ENCODE measurements at regions of chr12 and their contacts with region 1.

Region 1: GRCh38 chr12:92094751-92095161 is 50.9 kb downstream of the BTG1 start:
- DNase-seq: no peak
- H3K4me3 ChIP-seq: no peak overlapping the region
- CTCF ChIP-seq: peak; percentile 12

Region 2: GRCh38 chr12:91947459-91947858 is 147.3 kb before region 1 on chr12:
- in situ Hi-C with region 1: loop called (anchors 5 kb)
- DNase-seq: no peak
- H3K4me3 ChIP-seq: no peak overlapping the region
- CTCF ChIP-seq: no peak

Region 3: DNA sequence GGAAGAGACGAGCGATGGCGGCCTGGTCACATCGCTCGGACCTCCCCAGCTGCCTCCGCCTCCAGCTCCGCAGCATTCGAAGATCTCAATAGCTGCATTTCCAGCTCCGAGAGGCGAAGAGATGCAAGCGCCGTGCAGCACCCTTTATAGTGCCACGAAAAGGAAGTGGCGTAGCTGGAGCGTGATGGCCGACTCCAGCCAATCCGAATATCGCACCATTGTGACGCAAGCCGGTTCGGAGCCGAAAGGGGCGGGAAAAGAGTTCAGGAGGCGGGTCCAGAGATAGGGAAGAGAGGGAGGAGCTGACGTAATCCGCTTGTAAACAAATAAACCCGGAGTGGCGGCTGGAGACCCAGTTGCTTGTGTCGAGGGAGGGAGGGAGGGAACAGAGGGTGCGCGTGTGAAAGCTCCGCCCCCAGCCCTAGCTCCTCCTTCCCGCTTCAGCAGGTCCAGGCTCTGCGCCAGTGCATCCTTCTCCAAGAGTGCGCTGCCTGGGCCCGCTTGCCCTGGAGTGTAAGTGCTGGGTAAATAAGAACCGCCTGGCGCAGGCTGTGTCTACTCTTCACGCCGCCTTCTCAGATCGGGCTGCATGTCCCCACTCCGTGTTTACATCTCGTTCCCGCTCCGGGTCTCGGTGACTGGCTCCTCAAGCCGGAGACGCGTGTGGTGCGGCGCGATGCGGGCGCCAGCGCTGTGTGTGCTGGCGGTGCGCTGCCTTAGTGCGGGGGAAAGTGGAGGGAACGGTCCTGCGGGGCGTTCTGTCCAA is 51.2 kb after region 1 on chr12 and contains the start of gene BTG1:
- in situ Hi-C with region 1: no loop called
- DNase-seq: peak; percentile 100
- H3K4me3 ChIP-seq: peak within 1 kb of the TSS; percentile 79
- CTCF ChIP-seq: no peak

Region 4: GRCh38 chr12:92185052-92185451 is 90.3 kb after region 1 on chr12:
- in situ Hi-C with region 1: no loop called
- DNase-seq: no peak
- H3K4me3 ChIP-seq: no peak overlapping the region
- CTCF ChIP-seq: no peak

Measured in astrocyte of the cerebellum (primary cell).